ENCODE measurements at regions of chr7 and their contacts with region 1.

Region 1: DNA sequence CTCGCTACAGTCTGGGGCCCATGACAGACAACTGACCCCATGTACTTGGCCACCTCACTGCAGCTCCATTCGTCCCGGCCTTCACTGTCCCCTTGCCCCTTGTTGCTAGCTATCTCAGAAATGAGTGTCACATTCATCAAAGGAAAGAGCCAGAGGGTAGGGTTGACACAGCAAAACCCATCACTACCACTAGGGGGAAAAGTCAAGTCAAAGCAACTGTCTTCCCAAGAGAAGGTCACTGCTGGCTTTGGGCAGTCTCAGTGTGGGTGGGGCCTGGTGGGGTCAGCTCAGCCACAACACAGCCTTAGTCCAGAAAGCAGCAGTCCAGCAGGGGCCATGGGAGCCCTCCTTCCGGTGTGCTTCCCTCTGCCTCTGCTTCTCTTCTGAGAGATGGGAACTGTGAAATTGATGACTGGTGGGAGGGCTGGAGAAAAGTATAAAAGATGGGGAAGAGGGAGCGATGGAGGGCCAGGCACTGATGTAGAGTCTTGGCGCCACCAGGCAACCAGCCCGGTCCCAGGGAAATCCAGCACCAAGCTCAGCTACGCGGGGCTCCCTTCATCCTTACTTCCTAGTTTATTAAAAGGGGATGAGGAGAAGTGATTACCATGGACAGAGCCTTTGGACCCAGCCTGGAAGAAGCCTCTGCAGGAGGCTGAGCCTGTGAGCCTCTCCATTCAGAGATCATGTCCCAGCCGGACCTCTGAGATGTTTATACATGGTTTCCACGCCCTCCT is 58.0 kb downstream of the PLXNA4 start:
- DNase-seq: peak; percentile 52
- H3K4me3 ChIP-seq: no peak overlapping the region
- H3K27ac ChIP-seq: no peak overlapping the region
- H3K4me1 ChIP-seq: no peaks in the 10 kb centered on the region
- H3K27me3 ChIP-seq: no peaks in the 10 kb centered on the region
- CTCF ChIP-seq: peak; percentile 62
- EP300 ChIP-seq: no peak
- RAD21 ChIP-seq: peak; percentile 40

Region 2: DNA sequence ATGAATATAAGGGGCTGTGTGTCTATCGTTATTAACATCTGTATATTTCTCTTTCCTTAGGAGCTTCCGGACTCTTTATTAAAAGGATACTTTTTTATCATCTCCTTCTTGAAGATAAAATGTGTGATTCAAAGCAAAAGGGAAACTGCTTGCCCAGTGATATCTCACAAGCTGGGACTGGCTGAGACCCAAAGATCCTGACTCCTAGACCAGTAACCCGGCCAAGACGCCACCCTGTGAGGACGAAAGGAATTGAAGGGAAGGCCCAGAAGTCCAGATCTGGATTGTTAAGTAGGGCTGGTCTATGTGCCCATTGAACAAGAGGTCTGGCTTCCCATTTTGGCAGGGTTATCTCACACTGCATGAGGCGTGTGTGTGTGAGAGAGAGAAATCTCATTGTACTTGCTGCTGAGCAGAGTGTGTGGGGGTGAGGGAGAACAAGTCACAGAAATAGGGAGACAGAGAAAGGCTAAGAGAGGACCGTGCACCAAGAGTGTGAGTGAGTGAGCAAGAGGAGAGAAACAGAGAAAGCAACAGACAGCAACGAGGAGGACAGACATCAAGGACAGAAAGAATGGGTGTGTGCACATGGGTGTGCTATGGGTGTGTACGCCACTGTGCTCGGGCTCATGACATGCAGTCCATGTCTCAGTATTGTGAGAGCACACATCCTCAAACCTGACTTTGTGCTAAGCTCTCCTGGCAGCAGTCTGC is 17.4 kb before region 1 on chr7:
- CTCF ChIA-PET with region 1: interaction called, 28 read pairs
- POLR2A ChIA-PET with region 1: no interaction called
- DNase-seq: peak; percentile 43
- H3K4me3 ChIP-seq: no peak overlapping the region
- H3K27ac ChIP-seq: no peak overlapping the region; a peak in 1 of 4 replicates
- H3K4me1 ChIP-seq: peaks cover 0 to 72% of the 10 kb centered on the region in 2 experiments; a peak in 2 of 4 replicates
- H3K27me3 ChIP-seq: no peaks in the 10 kb centered on the region
- CTCF ChIP-seq: peak; percentile 57
- EP300 ChIP-seq: no peak
- RAD21 ChIP-seq: peak; percentile 61

Region 3: GRCh38 chr7:132537456-132538341 is 19.4 kb after region 1 on chr7:
- CTCF ChIA-PET with region 1: interaction called, 29 read pairs
- POLR2A ChIA-PET with region 1: no interaction called
- DNase-seq: no peak
- H3K4me3 ChIP-seq: no peak overlapping the region
- H3K27ac ChIP-seq: no peak overlapping the region
- H3K4me1 ChIP-seq: peaks cover 2 to 7% of the 10 kb centered on the region in 2 experiments; a peak in 3 of 4 replicates
- H3K27me3 ChIP-seq: no peaks in the 10 kb centered on the region
- CTCF ChIP-seq: no peak
- EP300 ChIP-seq: no peak
- RAD21 ChIP-seq: 0 out of 2 replicates have a peak, but pooled peaks have one; percentile 5

Measured in SK-N-SH (cell line).